CD14-positive monocyte (primary cell): ENCODE measurements at regions of chr19 and their contacts with region 1.

Region 1: GRCh38 chr19:18274781-18275356 is 617 bp upstream of the IQCN start:
- DNase-seq: peak; percentile 92 to 95 (median 95)
- H3K4me3 ChIP-seq: peak overlapping the region in 1 of 3 experiments; percentile 12
- H3K4me3 Mint-ChIP-seq: peak overlapping the region; percentile 35 to 58
- H3K27ac ChIP-seq: peak overlapping the region; percentile 29 to 82
- H3K27ac Mint-ChIP-seq: peak overlapping the region; percentile 54 to 84 (median 70)
- H3K4me1 ChIP-seq: peaks cover 32 to 42% of the 10 kb centered on the region in 2 donors
- H3K4me1 Mint-ChIP-seq: peaks cover 41% of the 10 kb centered on the region
- H3K27me3 ChIP-seq: no peaks in the 10 kb centered on the region
- H3K27me3 Mint-ChIP-seq: peaks cover 0 to 17% (median 2%) of the 10 kb centered on the region in 3 donors
- CTCF ChIP-seq: no peak

Region 2: GRCh38 chr19:18007044-18007916 is 267.6 kb before region 1 on chr19:
- intact Hi-C with region 1: no loop called
- DNase-seq: peak; percentile 80 to 84 (median 82)
- H3K4me3 ChIP-seq: peak overlapping the region; percentile 41 to 83 (median 45)
- H3K4me3 Mint-ChIP-seq: peak overlapping the region; percentile 94 to 99
- H3K27ac ChIP-seq: peak overlapping the region; percentile 71 to 82
- H3K27ac Mint-ChIP-seq: peak overlapping the region; percentile 86 to 97 (median 95)
- H3K4me1 ChIP-seq: peaks cover 34 to 45% of the 10 kb centered on the region in 2 donors
- H3K4me1 Mint-ChIP-seq: peaks cover 38% of the 10 kb centered on the region
- H3K27me3 ChIP-seq: no peaks in the 10 kb centered on the region
- H3K27me3 Mint-ChIP-seq: peaks cover 0 to 5% (median 0%) of the 10 kb centered on the region in 3 donors
- CTCF ChIP-seq: peak; percentile 97

Region 3: DNA sequence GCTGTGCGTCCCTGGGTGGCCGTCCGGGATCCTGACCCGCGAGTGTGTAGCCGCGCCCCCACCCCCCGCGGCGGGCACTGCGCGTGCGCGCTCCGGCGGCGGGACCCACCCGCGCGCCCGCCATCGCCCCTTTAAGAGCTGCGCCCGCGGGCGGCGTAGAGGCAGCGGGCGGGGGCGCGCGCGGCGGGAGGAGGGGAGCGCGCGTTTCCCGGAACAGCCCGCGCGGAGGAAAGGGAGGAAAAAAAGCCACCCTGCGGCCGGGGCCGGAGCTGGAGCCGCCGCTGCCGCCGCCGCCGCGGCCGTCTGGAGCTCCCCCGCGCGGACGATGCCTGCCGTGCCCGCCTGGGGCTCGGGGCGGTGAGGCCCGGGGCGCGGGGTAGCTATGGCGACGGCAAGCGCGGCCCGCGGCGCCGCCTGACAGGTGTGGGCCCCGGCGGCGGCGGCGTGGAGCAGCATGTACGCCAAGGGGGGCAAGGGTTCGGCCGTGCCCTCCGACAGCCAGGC is 144.4 kb after region 1 on chr19 and contains the start of gene SSBP4:
- intact Hi-C with region 1: loop called (anchors 5 to 10 kb)
- DNase-seq: peak; percentile 64 to 69 (median 69)
- H3K4me3 ChIP-seq: peak within 1 kb of the TSS; percentile 49 to 74 (median 59)
- H3K4me3 Mint-ChIP-seq: peak within 1 kb of the TSS; percentile 83 to 91
- H3K27ac ChIP-seq: peak within 1 kb of the TSS; percentile 99
- H3K27ac Mint-ChIP-seq: peak within 1 kb of the TSS; percentile 93 to 100 (median 97)
- H3K4me1 ChIP-seq: peaks cover 67 to 85% of the 10 kb centered on the region in 2 donors
- H3K4me1 Mint-ChIP-seq: peaks cover 75% of the 10 kb centered on the region
- H3K27me3 ChIP-seq: no peaks in the 10 kb centered on the region
- H3K27me3 Mint-ChIP-seq: peaks cover 0 to 6% (median 2%) of the 10 kb centered on the region in 3 donors
- CTCF ChIP-seq: peak; percentile 64
- polyA plus RNA-seq, gene SSBP4: 38.5 to 74.5 (median 48.3) TPM